Activated B cell treated with CpG ODN at 0.5 μM for 24 hours (primary cell): ENCODE measurements at regions of chr1 and their contacts with region 1.

Region 1: DNA sequence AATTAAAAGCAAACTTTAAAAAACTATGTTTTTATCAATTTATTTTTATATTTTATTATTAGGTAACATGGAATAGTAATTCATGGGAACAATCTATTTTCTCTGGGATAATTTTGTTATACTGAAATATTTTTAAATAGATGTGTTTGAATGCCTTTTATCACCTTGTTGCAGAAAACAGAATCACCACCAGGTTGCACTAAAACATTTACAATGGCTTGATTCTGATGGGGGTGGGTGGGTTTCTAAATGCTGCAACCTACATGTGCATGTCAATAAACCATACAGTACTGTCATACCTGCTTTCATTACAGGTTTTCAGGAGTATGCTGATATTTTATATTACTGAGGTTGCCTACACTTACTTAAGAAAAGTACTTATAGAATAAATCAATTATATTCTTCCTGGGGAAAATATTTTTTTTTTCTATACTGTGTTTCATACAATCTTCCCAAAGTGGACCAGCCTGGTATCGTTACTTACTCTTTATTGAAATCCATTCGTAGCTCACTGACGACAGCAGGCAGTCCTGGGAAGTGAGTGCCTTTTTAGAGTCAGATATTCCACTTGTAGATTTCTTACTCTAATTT is 132.8 kb downstream of the PTPRC start:
- DNase-seq: no peak
- ATAC-seq: no peak
- H3K4me3 Mint-ChIP-seq: no peak overlapping the region
- H3K27ac Mint-ChIP-seq: no peak overlapping the region
- H3K4me1 Mint-ChIP-seq: no peaks in the 10 kb centered on the region
- H3K27me3 Mint-ChIP-seq: no peaks in the 10 kb centered on the region
- CTCF ChIP-seq: no peak

Region 2: DNA sequence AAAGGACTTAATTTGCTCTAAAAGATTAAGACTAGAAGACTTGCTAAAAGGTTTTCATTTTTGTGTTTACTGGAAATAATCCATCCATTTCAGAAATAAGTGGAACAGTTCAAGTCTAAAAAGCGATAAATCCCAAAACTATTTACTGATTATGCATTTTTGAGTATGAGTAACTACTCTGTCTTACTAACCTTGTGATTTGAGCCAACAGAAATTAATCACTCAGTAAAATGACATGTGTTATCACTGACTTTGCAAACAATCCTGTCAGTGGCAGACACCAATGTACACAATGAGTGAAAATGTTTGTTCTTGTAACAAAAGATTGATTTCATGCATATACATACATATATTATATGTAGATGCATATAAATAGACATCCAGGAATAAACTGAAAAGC is 1214.3 kb before region 1 on chr1:
- CTCF ChIA-PET with region 1: no interaction called
- POLR2A ChIA-PET with region 1: no interaction called
- intact Hi-C with region 1: no loop called
- DNase-seq: no peak
- ATAC-seq: no peak
- H3K4me3 Mint-ChIP-seq: no peak overlapping the region
- H3K27ac Mint-ChIP-seq: no peak overlapping the region
- H3K4me1 Mint-ChIP-seq: no peaks in the 10 kb centered on the region
- H3K27me3 Mint-ChIP-seq: no peaks in the 10 kb centered on the region
- CTCF ChIP-seq: no peak

Region 3: DNA sequence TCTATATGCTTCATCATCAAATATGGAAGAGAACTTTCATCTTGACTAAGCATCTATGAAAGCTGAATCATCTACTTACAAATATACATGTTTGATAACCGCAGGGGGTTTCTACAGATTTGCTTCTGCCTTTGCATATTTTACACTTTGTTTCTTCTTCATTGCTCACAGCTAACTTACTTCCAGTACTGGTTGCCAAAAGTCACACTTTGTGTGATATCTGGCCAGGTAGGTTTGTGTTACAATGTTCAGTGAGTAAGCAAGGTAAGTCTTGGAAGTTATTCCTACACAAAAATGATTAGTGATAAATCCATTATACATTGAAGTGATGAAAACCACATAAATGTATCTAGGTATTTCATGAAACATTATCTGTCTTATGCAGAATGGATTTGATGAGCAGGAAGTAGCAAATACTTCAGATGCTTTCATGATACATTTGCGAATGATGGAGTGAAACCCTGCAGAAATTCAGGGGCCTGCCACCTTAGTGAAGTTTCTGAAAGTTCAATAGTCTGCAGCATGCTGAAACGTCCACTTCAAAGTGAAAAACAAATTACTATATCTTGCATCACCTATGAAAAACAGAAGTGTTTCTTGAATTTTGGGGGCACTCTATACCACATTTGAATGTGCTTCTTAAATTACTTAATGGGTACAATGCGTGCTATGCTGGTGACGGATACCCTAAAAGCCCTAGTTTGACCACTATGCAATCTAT is 418.5 kb before region 1 on chr1:
- CTCF ChIA-PET with region 1: no interaction called
- POLR2A ChIA-PET with region 1: no interaction called
- intact Hi-C with region 1: no loop called
- DNase-seq: no peak
- ATAC-seq: peak; percentile 31
- H3K4me3 Mint-ChIP-seq: no peak overlapping the region
- H3K27ac Mint-ChIP-seq: no peak overlapping the region
- H3K4me1 Mint-ChIP-seq: no peaks in the 10 kb centered on the region
- H3K27me3 Mint-ChIP-seq: peaks cover 7% of the 10 kb centered on the region
- CTCF ChIP-seq: no peak

Region 4: DNA sequence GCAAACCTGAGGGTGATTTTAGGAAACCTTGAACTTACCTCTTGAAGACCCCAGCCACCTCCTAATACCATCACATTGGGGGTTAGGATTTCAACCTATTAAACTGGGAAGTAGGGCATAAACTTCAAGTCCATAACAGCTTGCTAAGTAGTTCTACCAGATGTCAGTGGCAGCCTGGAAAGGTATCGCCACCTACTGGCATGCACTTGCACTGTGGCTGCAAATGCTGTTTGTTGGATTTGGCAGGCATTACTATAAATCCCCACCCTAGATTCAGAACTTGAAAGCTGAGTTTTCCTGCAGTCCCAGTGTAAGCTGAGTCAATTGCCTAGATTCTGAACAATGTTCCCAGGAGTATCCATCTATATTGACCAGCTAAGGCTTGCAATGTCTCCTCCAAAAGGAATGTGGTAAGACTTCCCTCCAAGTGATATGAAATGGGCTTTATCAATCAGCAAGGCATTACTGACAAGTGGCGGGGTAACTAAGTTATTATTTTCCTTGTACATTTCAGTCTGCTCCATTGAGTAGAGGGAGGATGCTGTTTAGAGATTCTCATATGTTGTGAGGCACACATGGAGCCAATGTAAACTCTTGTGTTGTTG is 341.7 kb after region 1 on chr1:
- CTCF ChIA-PET with region 1: interaction called, 14 read pairs
- POLR2A ChIA-PET with region 1: no interaction called
- intact Hi-C with region 1: loop called (anchors 1 kb)
- DNase-seq: peak; percentile 21
- ATAC-seq: peak; percentile 57
- H3K4me3 Mint-ChIP-seq: no peak overlapping the region
- H3K27ac Mint-ChIP-seq: no peak overlapping the region
- H3K4me1 Mint-ChIP-seq: peaks cover 5% of the 10 kb centered on the region
- H3K27me3 Mint-ChIP-seq: no peaks in the 10 kb centered on the region
- CTCF ChIP-seq: no peak

Region 5: GRCh38 chr1:199243423-199244061 is 471.9 kb after region 1 on chr1:
- CTCF ChIA-PET with region 1: interaction called, 3 read pairs
- POLR2A ChIA-PET with region 1: no interaction called
- intact Hi-C with region 1: loop called (anchors 1 kb)
- DNase-seq: peak; percentile 54
- ATAC-seq: peak; percentile 97
- H3K4me3 Mint-ChIP-seq: no peak overlapping the region
- H3K27ac Mint-ChIP-seq: no peak overlapping the region
- H3K4me1 Mint-ChIP-seq: peaks cover 17% of the 10 kb centered on the region
- H3K27me3 Mint-ChIP-seq: no peaks in the 10 kb centered on the region
- CTCF ChIP-seq: no peak

Region 6: GRCh38 chr1:199463521-199464128 is 692.0 kb after region 1 on chr1:
- CTCF ChIA-PET with region 1: no interaction called
- POLR2A ChIA-PET with region 1: no interaction called
- intact Hi-C with region 1: loop called (anchors 1 kb)
- DNase-seq: no peak
- ATAC-seq: no peak
- H3K4me3 Mint-ChIP-seq: no peak overlapping the region
- H3K27ac Mint-ChIP-seq: no peak overlapping the region
- H3K4me1 Mint-ChIP-seq: peaks cover 10% of the 10 kb centered on the region
- H3K27me3 Mint-ChIP-seq: no peaks in the 10 kb centered on the region
- CTCF ChIP-seq: no peak